HepG2 (cell line): ENCODE measurements at regions of chr1 and their contacts with region 1.

Region 1: DNA sequence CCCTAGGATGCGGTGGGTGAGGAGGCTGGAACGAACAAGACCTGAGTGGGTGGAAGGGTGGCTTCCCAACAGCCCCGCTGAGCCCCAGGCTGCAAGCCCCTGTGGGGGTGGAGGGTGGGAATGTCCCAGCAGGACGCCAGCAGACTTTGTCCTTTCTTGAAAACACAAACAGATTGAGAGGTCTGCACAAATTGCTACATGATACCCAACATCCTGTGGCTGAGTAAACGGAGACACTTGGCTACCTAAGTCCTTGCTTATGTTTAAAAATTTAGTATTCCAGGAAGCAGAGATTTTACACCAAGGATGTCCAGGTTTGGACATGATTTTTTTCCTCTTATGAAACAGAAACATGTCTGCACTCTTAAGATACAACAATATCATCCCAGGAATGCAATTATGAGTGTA is 11.8 kb upstream of the F3 start:
- DNase-seq: peak; percentile 45
- ATAC-seq: peak; percentile 18; the same call in 1 of the 3 replicates
- H3K4me3 ChIP-seq: no peak overlapping the region; a peak in 1 of 6 replicates
- H3K27ac ChIP-seq: no peak overlapping the region
- H3K4me1 ChIP-seq: peaks cover 69% of the 10 kb centered on the region
- H3K27me3 ChIP-seq: peaks cover 0 to 6% of the 10 kb centered on the region in 2 experiments; a peak in 1 of 5 replicates
- CTCF ChIP-seq: no peak
- EP300 ChIP-seq: no peak
- POLR2A ChIP-seq: no peak
- RAD21 ChIP-seq: no peak

Region 2: DNA sequence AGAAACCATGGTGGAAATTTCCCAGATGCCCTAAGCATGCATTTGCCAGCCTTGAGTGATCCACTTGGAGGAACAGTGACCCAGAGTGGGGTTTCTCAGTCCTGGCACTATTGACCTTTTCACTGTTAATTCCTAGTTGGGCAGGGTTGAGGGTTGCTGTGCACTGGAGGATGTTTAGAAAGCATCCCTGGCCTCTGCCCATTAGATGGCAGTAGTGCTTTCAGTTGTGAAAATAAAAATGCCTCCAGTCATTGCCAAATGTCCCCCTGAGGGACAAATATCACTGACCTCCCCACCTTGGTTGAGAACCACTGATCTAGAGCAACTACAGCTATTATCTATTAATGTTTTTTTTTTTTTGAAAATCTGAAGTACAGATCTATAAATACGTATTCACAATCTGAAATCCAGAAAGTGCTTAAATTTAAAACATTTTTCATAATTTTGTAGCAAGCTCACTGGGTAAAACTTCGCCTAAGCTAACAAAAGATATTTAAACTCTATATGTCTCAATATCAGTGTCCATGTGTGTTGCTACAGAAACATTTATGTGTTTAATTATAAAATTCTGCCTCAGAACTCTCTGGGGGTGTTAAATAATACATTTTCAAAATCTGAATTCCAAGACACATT is 39.1 kb before region 1 on chr1:
- CTCF ChIA-PET with region 1: no interaction called
- POLR2A ChIA-PET with region 1: no interaction called
- in situ Hi-C with region 1: no loop called
- intact Hi-C with region 1: no loop called
- DNase-seq: peak; percentile 46
- ATAC-seq: peak; percentile 92
- H3K4me3 ChIP-seq: no peak overlapping the region
- H3K27ac ChIP-seq: no peak overlapping the region
- H3K4me1 ChIP-seq: no peaks in the 10 kb centered on the region
- H3K27me3 ChIP-seq: no peaks in the 10 kb centered on the region
- CTCF ChIP-seq: peak; percentile 78
- EP300 ChIP-seq: no peak
- POLR2A ChIP-seq: no peak
- RAD21 ChIP-seq: peak; percentile 66

Region 3: GRCh38 chr1:94698759-94699502 is 145.6 kb after region 1 on chr1:
- CTCF ChIA-PET with region 1: no interaction called
- POLR2A ChIA-PET with region 1: no interaction called
- in situ Hi-C with region 1: no loop called
- intact Hi-C with region 1: loop called (anchors 10 kb)
- DNase-seq: peak; percentile 78
- ATAC-seq: peak; percentile 87
- H3K4me3 ChIP-seq: no peak overlapping the region; a peak in 1 of 6 replicates
- H3K27ac ChIP-seq: peak overlapping the region; percentile 78
- H3K4me1 ChIP-seq: peaks cover 62% of the 10 kb centered on the region
- H3K27me3 ChIP-seq: no peaks in the 10 kb centered on the region
- CTCF ChIP-seq: peak; percentile 66
- EP300 ChIP-seq: peak; percentile 11 to 86; a peak in 2 of 4 replicates
- POLR2A ChIP-seq: no peak
- RAD21 ChIP-seq: peak; percentile 26; the same call in 1 of the 2 replicates